Activated CD4-positive, alpha-beta T cell treated with anti-CD3 and anti-CD28 coated beads, Interleukin-2, amount 10 ng/mL, durations not matched to agents 24 days and 14 days (primary cell): ENCODE measurements at regions of chr11 and their contacts with region 1.

Region 1: GRCh38 chr11:17230867-17231851 is 23.4 kb upstream of the PIK3C2A start:
- DNase-seq: peak; percentile 85
- H3K4me3 Mint-ChIP-seq: peak overlapping the region; percentile 34
- H3K27ac Mint-ChIP-seq: peak overlapping the region; percentile 59
- H3K4me1 Mint-ChIP-seq: peaks cover 13% of the 10 kb centered on the region
- H3K27me3 Mint-ChIP-seq: peaks cover 30% of the 10 kb centered on the region

Region 2: DNA sequence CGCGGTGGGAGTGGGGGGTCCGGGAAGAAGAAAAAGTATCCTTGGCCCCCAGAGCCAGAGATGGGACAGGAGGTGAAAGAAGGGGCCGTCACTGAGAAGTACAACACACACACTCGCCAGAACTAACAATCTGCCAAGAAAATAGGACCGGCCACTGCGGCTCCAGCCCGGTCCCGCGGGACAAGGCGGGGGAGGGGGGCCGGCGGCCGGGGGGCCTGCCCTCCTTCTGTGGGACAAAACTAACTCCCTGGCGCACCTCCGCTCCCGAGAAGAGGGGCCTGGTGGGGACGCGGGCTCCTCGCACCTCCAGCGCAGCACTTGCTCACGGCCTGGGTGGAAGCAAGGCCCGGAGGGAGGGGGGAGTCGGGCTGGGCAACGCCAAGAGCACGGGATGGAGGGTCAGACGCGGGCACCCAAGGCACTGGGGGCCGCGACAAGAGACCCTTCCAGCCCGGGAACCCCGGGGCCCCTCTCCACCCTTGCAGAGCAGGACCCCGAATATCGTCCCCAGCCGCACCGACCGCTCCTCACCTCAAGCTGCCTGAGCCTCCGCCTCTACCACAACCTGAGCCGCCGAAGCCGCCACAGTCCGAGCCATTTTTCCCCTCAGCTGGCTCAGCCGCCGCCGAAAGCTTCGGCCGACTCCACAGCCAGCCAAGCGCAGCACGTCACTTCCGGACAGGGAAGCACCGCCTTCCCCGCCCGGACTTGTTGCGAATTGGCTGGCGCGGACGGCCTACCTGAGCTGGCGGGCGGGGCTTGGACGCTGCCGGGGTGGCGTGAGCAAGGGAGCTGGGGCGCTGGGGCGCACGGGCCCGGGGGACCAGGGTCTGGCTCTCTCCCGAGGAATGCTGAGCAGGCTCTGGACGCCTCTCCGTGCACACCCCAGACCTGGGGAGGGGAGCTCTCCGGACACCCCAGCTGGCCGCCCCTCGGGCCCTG is 23.6 kb before region 1 on chr11 and contains the start of gene PIK3C2A:
- intact Hi-C with region 1: loop called (anchors 1 kb)
- DNase-seq: peak; percentile 99
- H3K4me3 Mint-ChIP-seq: peak within 1 kb of the TSS; percentile 97
- H3K27ac Mint-ChIP-seq: peak within 1 kb of the TSS; percentile 96
- H3K4me1 Mint-ChIP-seq: peaks cover 26% of the 10 kb centered on the region
- H3K27me3 Mint-ChIP-seq: no peaks in the 10 kb centered on the region
- total RNA-seq, gene PIK3C2A: 30.3 and 35.3 TPM in 2 replicates

Region 3: GRCh38 chr11:17298302-17298701 is 67.1 kb after region 1 on chr11:
- intact Hi-C with region 1: loop called (anchors 1 kb)
- DNase-seq: peak; percentile 70
- H3K4me3 Mint-ChIP-seq: peak overlapping the region; percentile 5
- H3K27ac Mint-ChIP-seq: no peak overlapping the region
- H3K4me1 Mint-ChIP-seq: peaks cover 27% of the 10 kb centered on the region
- H3K27me3 Mint-ChIP-seq: no peaks in the 10 kb centered on the region

Region 4: GRCh38 chr11:17368176-17368950 is 137.2 kb after region 1 on chr11:
- intact Hi-C with region 1: loop called (anchors 1 kb)
- DNase-seq: no peak
- H3K4me3 Mint-ChIP-seq: no peak overlapping the region
- H3K27ac Mint-ChIP-seq: peak overlapping the region; percentile 45
- H3K4me1 Mint-ChIP-seq: peaks cover 10% of the 10 kb centered on the region
- H3K27me3 Mint-ChIP-seq: peaks cover 5% of the 10 kb centered on the region

Region 5: GRCh38 chr11:17504330-17505107 is 273.4 kb after region 1 on chr11:
- intact Hi-C with region 1: loop called (anchors 1 kb)
- DNase-seq: peak; percentile 95
- H3K4me3 Mint-ChIP-seq: no peak overlapping the region
- H3K27ac Mint-ChIP-seq: no peak overlapping the region
- H3K4me1 Mint-ChIP-seq: no peaks in the 10 kb centered on the region
- H3K27me3 Mint-ChIP-seq: peaks cover 16% of the 10 kb centered on the region